Brain microvascular endothelial cell (primary cell): ENCODE measurements at regions of chr11 and their contacts with region 1.

Region 1: DNA sequence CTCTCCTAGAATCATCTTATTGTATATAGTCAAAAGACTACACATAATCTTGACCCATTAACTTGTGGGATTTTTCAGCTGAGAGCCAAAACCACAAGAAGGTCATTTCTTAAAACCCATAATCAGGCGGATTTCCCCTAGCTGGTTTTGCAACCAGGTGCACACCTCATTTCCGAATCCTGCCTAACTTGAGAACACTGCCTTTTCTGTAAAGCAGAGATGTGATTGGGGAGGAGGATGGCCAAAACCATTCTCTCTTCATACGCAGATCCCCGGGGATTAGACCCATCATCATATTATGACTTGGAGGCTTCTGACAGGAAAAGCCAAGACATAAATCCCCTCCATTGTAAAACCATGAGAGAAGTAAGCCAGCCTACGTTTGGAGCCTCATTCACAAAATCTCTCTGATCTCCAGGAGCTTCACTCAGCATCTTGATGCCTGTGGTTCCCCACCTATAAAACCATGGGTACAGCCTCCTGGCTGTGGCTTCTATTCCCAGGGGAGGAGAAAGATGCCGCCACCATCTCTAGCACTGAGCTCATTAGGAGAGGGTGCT is 191.3 kb downstream of the KIF18A start:
- DNase-seq: no peak
- H3K4me3 ChIP-seq: no peak overlapping the region
- H3K27ac ChIP-seq: no peak overlapping the region
- H3K27me3 ChIP-seq: no peaks in the 10 kb centered on the region
- CTCF ChIP-seq: no peak

Region 2: GRCh38 chr11:27705873-27706820 is 210.5 kb before region 1 on chr11:
- in situ Hi-C with region 1: loop called (anchors 25 kb)
- DNase-seq: no peak
- H3K4me3 ChIP-seq: no peak overlapping the region
- H3K27ac ChIP-seq: no peak overlapping the region
- H3K27me3 ChIP-seq: no peaks in the 10 kb centered on the region
- CTCF ChIP-seq: peak; percentile 81